Heart left ventricle (tissue), 16 donors: ENCODE measurements at regions of chr6 and their contacts with region 1.

Region 1: GRCh38 chr6:42043787-42044475 is 6.4 kb upstream of the TAF8 start:
- DNase-seq: peak; percentile 87 to 92 (median 88)
- ATAC-seq: peak; percentile 52 to 80 (median 74)
- H3K4me3 ChIP-seq: peak overlapping the region in 4 of 12 donors; percentile 15 to 37 (median 20)
- H3K27ac ChIP-seq: peak overlapping the region in 10 of 12 donors; percentile 81 to 98 (median 94)
- H3K4me1 ChIP-seq: peaks cover 16 to 94% (median 59%) of the 10 kb centered on the region in 12 donors
- H3K27me3 ChIP-seq: no peaks in the 10 kb centered on the region
- CTCF ChIP-seq: peak; percentile 92 to 98 (median 97)
- POLR2A ChIP-seq: no peak

Region 2: GRCh38 chr6:41602864-41603608 is 440.9 kb before region 1 on chr6:
- intact Hi-C with region 1: loop called in 2 of 10 experiments (anchors 10 kb)
- DNase-seq: peak; percentile 84 to 88 (median 84)
- ATAC-seq: peak; percentile 62 to 87 (median 81)
- H3K4me3 ChIP-seq: peak overlapping the region in 9 of 12 donors; percentile 2 to 40 (median 17)
- H3K27ac ChIP-seq: peak overlapping the region in 3 of 12 donors; percentile 5 to 52 (median 51)
- H3K4me1 ChIP-seq: peaks cover 0 to 11% (median 3%) of the 10 kb centered on the region in 12 donors
- H3K27me3 ChIP-seq: no peaks in the 10 kb centered on the region
- CTCF ChIP-seq: peak; percentile 77 to 96 (median 90)
- POLR2A ChIP-seq: no peak

Region 3: GRCh38 chr6:41895300-41896233 is 148.4 kb before region 1 on chr6 and contains the start of gene USP49:
- intact Hi-C with region 1: loop called in 2 of 10 experiments (anchors 5 kb)
- DNase-seq: peak; percentile 88 to 92 (median 91)
- ATAC-seq: peak; percentile 92 to 99 (median 98)
- H3K4me3 ChIP-seq: peak within 1 kb of the TSS; percentile 59 to 94 (median 79)
- H3K27ac ChIP-seq: peak within 1 kb of the TSS in 11 of 12 donors; percentile 60 to 92 (median 74)
- H3K4me1 ChIP-seq: peaks cover 0 to 31% (median 12%) of the 10 kb centered on the region in 12 donors
- H3K27me3 ChIP-seq: no peaks in the 10 kb centered on the region
- CTCF ChIP-seq: no peak
- POLR2A ChIP-seq: no peak
- total RNA-seq, gene USP49: 1.2 to 3.4 (median 2.4) TPM

Region 4: DNA sequence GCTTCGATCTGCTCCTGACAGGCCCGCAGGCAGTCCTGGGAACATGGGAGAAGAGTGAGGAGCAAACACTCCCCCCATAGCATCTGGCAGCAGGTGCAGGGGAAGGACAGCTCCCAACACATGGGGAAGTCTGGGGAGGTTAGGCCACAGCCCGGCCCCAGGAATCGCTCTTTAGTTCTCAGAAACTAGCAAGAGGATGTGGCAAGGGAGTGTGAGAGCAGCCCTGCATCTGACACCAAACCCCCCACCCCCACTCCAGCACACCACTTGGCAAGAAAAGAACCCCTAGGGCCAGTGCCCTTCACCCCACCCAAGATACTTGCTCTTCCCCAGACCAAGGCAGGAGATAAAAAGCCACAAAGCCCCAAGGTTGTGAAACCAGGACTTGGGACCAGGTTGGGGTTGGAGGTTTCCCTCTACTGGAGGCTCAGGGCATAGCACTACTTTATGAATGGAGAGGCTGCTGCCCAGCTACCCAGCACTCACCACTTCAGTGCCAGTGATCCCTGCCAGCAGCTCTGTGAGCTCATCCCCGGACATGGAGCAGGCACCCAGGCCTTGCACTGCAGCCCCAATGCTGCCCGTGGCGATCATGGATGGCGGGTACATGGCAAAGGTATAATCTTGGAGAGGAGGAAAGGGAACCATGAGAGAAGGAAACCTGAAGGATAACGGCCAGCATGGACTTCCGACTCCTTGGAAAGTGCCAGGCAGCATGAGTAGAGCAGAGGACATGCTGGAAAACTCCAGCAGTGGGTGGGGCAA is 107.7 kb before region 1 on chr6:
- intact Hi-C with region 1: loop called (anchors 1 to 5 kb)
- DNase-seq: peak; percentile 71 to 87 (median 76)
- ATAC-seq: peak; percentile 62 to 82 (median 72)
- H3K4me3 ChIP-seq: peak overlapping the region in 2 of 12 donors; percentile 9 to 93
- H3K27ac ChIP-seq: peak overlapping the region in 9 of 12 donors; percentile 46 to 95 (median 87)
- H3K4me1 ChIP-seq: peaks cover 7 to 65% (median 48%) of the 10 kb centered on the region in 12 donors
- H3K27me3 ChIP-seq: no peaks in the 10 kb centered on the region
- CTCF ChIP-seq: peak; percentile 67 to 86 (median 76)
- POLR2A ChIP-seq: no peak